OCI-LY7 (cell line): ENCODE measurements at regions of chr3 and their contacts with region 1.

Region 1: GRCh38 chr3:58491506-58492402 is at the start of gene KCTD6:
- DNase-seq: peak; percentile 96
- H3K4me3 ChIP-seq: peak within 1 kb of the TSS; percentile 77
- H3K27ac ChIP-seq: peak within 1 kb of the TSS; percentile 25
- H3K4me1 ChIP-seq: peaks cover 48% of the 10 kb centered on the region
- CTCF ChIP-seq: peak; percentile 68
- total RNA-seq, gene KCTD6: 12.6 and 17.1 TPM in 2 replicates

Region 2: GRCh38 chr3:58237238-58237940 is 254.4 kb before region 1 on chr3 and contains the start of gene ABHD6:
- CTCF ChIA-PET with region 1: no interaction called
- POLR2A ChIA-PET with region 1: no interaction called
- intact Hi-C with region 1: loop called (anchors 1 kb)
- DNase-seq: peak; percentile 86
- H3K4me3 ChIP-seq: peak within 1 kb of the TSS; percentile 80
- H3K27ac ChIP-seq: peak within 1 kb of the TSS; percentile 50
- H3K4me1 ChIP-seq: peaks cover 25% of the 10 kb centered on the region
- CTCF ChIP-seq: peak; percentile 59
- total RNA-seq, gene ABHD6: 5.8 TPM in 2 replicates

Region 3: GRCh38 chr3:58433400-58434169 is 58.2 kb before region 1 on chr3 and contains the start of gene PDHB:
- CTCF ChIA-PET with region 1: no interaction called
- POLR2A ChIA-PET with region 1: interaction called, 3 read pairs
- intact Hi-C with region 1: loop called (anchors 5 kb)
- DNase-seq: peak; percentile 93
- H3K4me3 ChIP-seq: peak within 1 kb of the TSS; percentile 83
- H3K27ac ChIP-seq: peak within 1 kb of the TSS; percentile 39
- H3K4me1 ChIP-seq: peaks cover 27% of the 10 kb centered on the region
- CTCF ChIP-seq: 0 out of 2 replicates have a peak, but pooled peaks have one; percentile 23
- total RNA-seq, gene PDHB: 60.8 and 76.8 TPM in 2 replicates